IMR-90 (cell line): ENCODE measurements at regions of chrX and their contacts with region 1.

Region 1: DNA sequence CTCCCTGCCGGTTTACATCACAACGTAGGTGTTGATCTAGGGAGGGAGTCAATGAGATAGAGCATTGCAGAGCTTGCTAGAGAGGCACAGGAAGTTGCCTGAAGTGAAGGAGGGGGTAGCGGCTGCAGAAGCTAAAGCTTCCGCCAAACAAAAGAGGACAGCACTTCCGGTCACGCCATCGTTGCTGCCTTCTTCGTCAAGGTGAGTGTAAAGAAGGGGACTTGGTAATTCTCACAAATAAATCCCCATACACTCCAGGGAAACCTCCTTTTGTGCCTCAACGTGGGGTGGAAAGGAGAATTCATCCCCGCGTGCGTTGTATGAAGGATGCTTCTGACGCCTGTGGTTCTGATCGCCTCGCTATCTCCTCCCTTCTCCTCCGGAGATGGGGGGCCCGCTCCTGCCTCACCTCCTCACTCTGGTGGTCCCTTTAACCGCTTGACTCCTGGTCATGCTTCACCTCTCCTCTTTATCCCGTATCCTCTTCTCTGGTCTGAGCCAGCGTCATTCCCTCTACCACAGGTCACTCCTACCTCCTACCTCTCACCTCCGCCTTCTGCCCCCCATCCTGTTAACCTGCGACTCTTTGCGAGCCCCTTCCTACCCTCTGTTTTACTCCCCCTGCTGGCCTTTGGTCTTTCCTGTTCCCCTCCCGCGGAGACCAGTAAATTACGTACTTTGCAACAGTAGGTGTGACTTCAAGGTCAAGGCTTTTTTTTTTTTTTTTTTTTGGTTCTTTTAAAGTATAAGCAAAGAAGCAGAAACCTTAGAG is 59.9 kb downstream of the GSPT2 start:
- DNase-seq: peak; percentile 67
- ATAC-seq: peak; percentile 98
- H3K4me3 ChIP-seq: peak overlapping the region; percentile 93
- H3K27ac ChIP-seq: peak overlapping the region; percentile 51
- H3K4me1 ChIP-seq: no peaks in the 10 kb centered on the region
- H3K27me3 ChIP-seq: no peaks in the 10 kb centered on the region
- CTCF ChIP-seq: peak; percentile 8; the same call in 1 of the 2 replicates
- POLR2A ChIP-seq: no peak
- RAD21 ChIP-seq: no peak

Region 2: GRCh38 chrX:51892921-51893745 is 90.0 kb after region 1 on chrX and contains the start of gene MAGED1:
- CTCF ChIA-PET with region 1: no interaction called
- POLR2A ChIA-PET with region 1: interaction called, 3 read pairs
- dilution Hi-C with region 1: no loop called
- in situ Hi-C with region 1: no loop called
- intact Hi-C with region 1: loop called (anchors 2 kb)
- DNase-seq: peak; percentile 95
- ATAC-seq: peak; percentile 86
- H3K4me3 ChIP-seq: peak within 1 kb of the TSS; percentile 97
- H3K27ac ChIP-seq: peak within 1 kb of the TSS; percentile 85
- H3K4me1 ChIP-seq: peaks cover 17% of the 10 kb centered on the region
- H3K27me3 ChIP-seq: no peaks in the 10 kb centered on the region
- CTCF ChIP-seq: no peak
- POLR2A ChIP-seq: peak; percentile 97
- RAD21 ChIP-seq: no peak
- total RNA-seq, gene MAGED1: 415 and 484 TPM in 2 replicates

Region 3: GRCh38 chrX:51905711-51906110 is 102.6 kb after region 1 on chrX:
- CTCF ChIA-PET with region 1: no interaction called
- POLR2A ChIA-PET with region 1: no interaction called
- dilution Hi-C with region 1: no loop called
- in situ Hi-C with region 1: no loop called
- intact Hi-C with region 1: no loop called
- DNase-seq: no peak
- ATAC-seq: no peak
- H3K4me3 ChIP-seq: no peak overlapping the region
- H3K27ac ChIP-seq: no peak overlapping the region
- H3K4me1 ChIP-seq: no peaks in the 10 kb centered on the region
- H3K27me3 ChIP-seq: no peaks in the 10 kb centered on the region; the same call in 1 of the 2 replicates
- CTCF ChIP-seq: no peak
- POLR2A ChIP-seq: no peak
- RAD21 ChIP-seq: no peak